ENCODE measurements at regions of chr3 and their contacts with region 1.

Region 1: DNA sequence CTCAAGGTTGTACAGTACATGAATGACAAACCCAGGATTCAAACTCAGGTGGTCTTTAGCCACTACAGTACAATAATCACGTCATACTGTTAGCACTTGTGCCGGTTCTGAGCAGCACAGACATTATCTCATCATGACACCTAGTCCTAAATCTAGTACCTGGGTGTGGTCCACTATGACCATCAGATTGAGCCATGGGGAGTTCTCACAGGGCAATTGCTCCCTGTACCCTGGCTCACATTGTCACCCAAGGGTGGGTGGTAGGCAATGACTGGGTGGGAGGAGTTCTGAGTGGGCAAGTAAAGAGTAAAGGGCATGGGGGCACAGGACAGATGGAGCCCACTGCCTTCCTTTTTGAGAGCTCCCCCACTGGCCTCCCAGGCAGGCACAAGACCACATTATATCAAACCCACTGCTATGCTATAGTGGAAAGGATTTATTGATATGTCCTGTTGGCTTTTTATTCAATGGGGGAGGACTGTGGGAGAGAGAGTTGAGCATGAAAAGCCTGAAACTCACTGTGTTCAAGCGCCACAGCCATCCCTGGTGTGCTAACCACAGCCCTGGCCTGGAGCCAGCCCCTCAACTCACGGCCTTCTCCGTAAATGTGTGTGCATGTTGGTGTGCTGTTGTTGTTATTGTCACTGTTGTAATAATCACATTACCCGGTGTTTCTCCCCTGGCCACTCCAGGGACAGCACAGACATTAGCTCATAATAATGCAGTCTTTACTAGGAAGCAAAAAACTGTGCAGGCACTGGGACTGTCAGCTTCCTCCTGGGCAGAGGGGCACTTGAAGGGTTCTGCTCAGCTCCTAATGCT is 27.3 kb downstream of the ADCY5 start:
- DNase-seq: no peak
- ATAC-seq: no peak
- H3K4me3 Mint-ChIP-seq: no peak overlapping the region
- H3K27ac Mint-ChIP-seq: no peak overlapping the region
- H3K4me1 Mint-ChIP-seq: peaks cover 9% of the 10 kb centered on the region
- H3K27me3 Mint-ChIP-seq: no peaks in the 10 kb centered on the region
- CTCF ChIP-seq: no peak

Region 2: GRCh38 chr3:123297627-123297899 is 124.0 kb before region 1 on chr3:
- CTCF ChIA-PET with region 1: no interaction called
- POLR2A ChIA-PET with region 1: no interaction called
- DNase-seq: peak; percentile 36
- ATAC-seq: peak; percentile 66
- H3K4me3 Mint-ChIP-seq: no peak overlapping the region
- H3K27ac Mint-ChIP-seq: no peak overlapping the region
- H3K4me1 Mint-ChIP-seq: no peaks in the 10 kb centered on the region
- H3K27me3 Mint-ChIP-seq: no peaks in the 10 kb centered on the region
- CTCF ChIP-seq: no peak

Region 3: GRCh38 chr3:123489400-123490004 is 67.9 kb after region 1 on chr3:
- CTCF ChIA-PET with region 1: interaction called, 12 read pairs
- POLR2A ChIA-PET with region 1: no interaction called
- DNase-seq: peak; percentile 86
- ATAC-seq: peak; percentile 95
- H3K4me3 Mint-ChIP-seq: no peak overlapping the region
- H3K27ac Mint-ChIP-seq: no peak overlapping the region
- H3K4me1 Mint-ChIP-seq: no peaks in the 10 kb centered on the region
- H3K27me3 Mint-ChIP-seq: no peaks in the 10 kb centered on the region; the same call in 1 of the 2 replicates
- CTCF ChIP-seq: peak; percentile 74

Measured in WTC11 (cell line).